Panc1 (cell line): ENCODE measurements at regions of chr17 and their contacts with region 1.

Region 1: DNA sequence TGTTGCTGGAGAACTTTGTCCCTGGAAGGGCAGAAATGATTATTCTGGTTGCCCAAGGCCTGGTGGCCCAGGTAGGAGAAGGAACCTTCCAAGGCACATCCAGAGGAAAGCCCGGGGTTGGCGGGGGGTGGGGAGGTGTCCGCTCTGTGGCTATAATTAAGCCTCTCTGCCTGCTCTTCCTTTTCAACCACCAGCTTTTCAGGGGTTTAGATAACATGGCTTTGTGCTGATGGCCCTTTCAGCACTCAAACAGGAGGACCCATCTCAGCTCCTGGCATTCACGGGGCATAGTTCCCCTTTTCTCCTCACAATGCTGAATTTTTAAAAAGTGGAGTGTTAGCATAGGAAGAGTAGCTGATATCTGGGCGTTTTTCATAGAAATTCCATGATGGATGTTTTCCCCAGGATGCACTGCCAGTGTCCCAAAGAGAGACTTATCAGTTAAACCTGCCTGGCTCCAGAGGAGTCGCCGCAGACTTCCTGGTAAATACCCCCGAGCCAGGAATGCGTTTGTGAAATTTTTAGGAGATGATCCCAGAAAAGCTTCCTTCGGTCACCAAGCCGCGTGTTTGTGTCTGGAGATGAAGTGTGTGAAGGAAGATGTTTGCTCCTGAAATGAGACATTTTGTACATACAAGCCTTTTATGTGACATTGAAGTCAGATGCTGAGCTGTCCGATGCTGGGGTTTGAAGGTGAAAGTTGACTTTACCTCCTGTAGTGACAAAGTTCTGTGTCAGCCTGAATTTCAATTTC is 188.5 kb downstream of the MSI2 start:
- DNase-seq: no peak
- ATAC-seq: no peak
- H3K4me3 ChIP-seq: no peak overlapping the region
- H3K27ac ChIP-seq: no peak overlapping the region
- H3K4me1 ChIP-seq: peaks cover 6% of the 10 kb centered on the region; the same call in 1 of the 2 replicates
- H3K27me3 ChIP-seq: no peaks in the 10 kb centered on the region
- CTCF ChIP-seq: no peak

Region 2: DNA sequence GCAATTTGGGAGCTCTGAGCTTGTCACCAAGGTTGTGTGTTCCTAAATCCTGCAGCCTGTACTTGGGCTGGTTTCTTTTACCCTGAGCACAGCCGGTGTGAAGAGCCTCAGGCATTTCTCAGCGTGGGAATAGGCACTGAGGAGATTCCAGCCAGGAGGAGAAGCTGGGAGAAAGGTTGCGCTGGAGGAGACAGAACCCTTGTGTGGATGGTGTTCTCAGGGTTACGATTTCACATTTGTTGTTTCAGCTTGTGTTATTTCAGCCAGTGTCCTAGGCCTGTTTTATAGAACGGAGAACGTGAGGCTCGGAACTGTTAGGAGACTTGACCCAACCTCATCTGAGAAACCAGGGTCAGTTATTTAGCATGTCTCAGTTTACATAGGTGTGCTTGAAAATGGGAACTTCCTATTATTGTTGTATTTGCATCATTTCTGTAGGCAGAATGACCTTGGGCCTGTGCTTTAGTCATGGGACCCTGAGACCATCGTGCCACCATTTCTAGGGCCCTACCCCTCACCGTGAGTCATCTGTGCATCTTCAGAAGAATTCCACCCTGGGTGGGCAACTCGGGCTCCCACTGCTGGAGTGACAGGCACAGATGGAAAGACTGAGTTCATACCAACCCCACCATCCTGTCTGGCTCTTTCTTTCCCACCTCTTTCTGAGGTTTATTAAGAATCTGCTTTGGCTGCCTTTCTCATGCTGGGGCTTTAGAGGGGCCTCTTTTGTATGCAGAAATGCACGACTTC is 53.6 kb before region 1 on chr17:
- CTCF ChIA-PET with region 1: no interaction called
- POLR2A ChIA-PET with region 1: no interaction called
- in situ Hi-C with region 1: no loop called
- intact Hi-C with region 1: no loop called
- DNase-seq: no peak
- ATAC-seq: no peak
- H3K4me3 ChIP-seq: no peak overlapping the region
- H3K27ac ChIP-seq: no peak overlapping the region
- H3K4me1 ChIP-seq: no peaks in the 10 kb centered on the region
- H3K27me3 ChIP-seq: no peaks in the 10 kb centered on the region
- CTCF ChIP-seq: no peak

Region 3: GRCh38 chr17:57498443-57498842 is 53.6 kb after region 1 on chr17:
- CTCF ChIA-PET with region 1: no interaction called
- POLR2A ChIA-PET with region 1: interaction called, 11 read pairs
- in situ Hi-C with region 1: no loop called
- intact Hi-C with region 1: no loop called
- DNase-seq: no peak
- ATAC-seq: no peak
- H3K4me3 ChIP-seq: no peak overlapping the region
- H3K27ac ChIP-seq: no peak overlapping the region
- H3K4me1 ChIP-seq: no peaks in the 10 kb centered on the region
- H3K27me3 ChIP-seq: no peaks in the 10 kb centered on the region
- CTCF ChIP-seq: no peak